H1 (cell line): ENCODE measurements at regions of chr16 and their contacts with region 1.

Region 1: DNA sequence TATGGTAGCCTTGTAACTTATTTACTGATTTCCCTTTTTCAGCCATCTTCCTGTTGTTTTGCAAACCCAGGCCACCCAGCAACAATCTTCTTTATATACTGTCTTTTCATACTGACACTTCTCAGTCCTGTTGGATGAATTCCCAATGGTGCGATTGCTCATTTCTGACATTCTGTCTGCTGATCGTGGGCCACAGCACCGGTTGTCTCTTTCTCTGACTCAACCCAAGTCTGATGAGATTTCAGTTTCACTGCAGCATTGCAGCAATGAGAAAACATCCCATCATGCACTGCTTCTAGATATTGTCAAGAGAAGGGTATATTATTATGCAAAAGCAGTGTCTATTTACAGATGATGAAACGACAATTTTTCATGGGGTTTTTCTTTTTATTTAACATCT is 349.2 kb upstream of the HSBP1 start:
- DNase-seq: no peak
- H3K4me3 ChIP-seq: no peak overlapping the region
- H3K27ac ChIP-seq: no peak overlapping the region
- H3K4me1 ChIP-seq: no peaks in the 10 kb centered on the region
- H3K27me3 ChIP-seq: no peaks in the 10 kb centered on the region
- CTCF ChIP-seq: no peak
- EP300 ChIP-seq: no peak
- POLR2A ChIP-seq: no peak
- RAD21 ChIP-seq: no peak

Region 2: DNA sequence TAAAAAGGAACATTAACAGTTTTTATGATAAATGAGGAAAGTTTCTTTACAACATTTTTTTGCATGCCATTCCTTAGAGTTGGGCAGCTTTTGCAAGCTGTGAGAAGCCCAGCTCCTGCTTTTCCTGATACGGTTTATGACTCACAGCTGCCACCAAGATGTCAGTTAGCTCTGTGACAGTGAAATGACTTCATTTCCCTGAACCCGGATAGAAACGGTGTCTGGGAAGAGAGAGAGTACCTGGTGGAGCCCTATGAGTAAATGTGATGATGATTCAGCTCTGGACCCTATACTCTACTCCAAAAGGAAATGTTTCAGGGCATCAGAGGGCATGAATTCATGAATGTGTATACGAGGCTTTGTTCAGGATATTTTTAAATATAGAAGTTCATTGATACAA is 17.1 kb before region 1 on chr16:
- CTCF ChIA-PET with region 1: interaction called, 18 read pairs
- POLR2A ChIA-PET with region 1: no interaction called
- DNase-seq: no peak
- H3K4me3 ChIP-seq: no peak overlapping the region
- H3K27ac ChIP-seq: no peak overlapping the region
- H3K4me1 ChIP-seq: no peaks in the 10 kb centered on the region
- H3K27me3 ChIP-seq: no peaks in the 10 kb centered on the region
- CTCF ChIP-seq: no peak
- EP300 ChIP-seq: no peak
- POLR2A ChIP-seq: no peak
- RAD21 ChIP-seq: no peak